Activated CD8-positive, alpha-beta T cell treated with anti-CD3 and anti-CD28 coated beads for 36 hours (primary cell): ENCODE measurements at regions of chr1 and their contacts with region 1.

Region 1: DNA sequence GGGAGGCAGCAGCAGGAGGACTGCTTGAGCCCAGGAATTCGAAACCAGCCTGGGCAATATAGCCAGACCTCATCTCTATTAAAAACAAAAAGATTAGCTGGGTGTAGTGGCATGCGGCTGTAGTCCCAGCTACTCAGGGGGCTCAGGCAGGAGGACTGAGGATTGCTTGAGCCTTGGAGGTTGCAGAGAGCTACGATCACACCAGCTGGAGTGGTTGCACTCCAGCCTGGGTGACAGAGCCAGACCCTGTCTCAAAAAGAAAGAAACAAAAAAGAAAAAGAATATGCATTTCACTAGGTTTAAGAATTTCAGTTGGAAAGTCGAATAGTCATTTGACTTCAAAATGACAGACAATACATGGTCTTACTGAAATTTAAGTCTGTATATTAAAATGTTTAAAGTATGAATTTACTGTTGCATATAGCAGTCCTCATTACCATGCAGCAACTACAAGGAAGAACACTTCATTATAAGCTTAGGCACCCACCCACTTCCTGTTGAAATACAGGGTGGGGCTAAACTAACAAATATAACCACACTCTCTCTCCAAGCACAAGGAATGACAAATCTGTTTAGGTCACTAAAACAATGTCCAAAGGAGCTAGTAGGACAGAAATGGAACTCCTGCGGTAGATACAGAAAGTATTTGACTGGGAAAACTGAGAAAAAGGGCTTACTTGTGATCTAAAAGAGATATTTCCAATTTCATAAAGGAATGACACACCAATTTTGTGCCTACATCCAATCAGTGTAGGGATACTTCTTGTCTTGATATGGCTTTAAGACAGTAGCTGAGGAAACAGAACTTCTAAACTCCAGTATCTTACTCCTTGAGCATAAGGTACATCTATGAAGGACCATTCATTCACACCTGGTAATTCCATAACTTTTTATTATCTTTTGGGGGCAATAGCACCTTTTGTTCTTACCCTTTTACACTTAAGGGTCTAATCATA is 44.1 kb downstream of the GPR3 start:
- DNase-seq: no peak
- ATAC-seq: peak; percentile 77
- H3K4me3 Mint-ChIP-seq: no peak overlapping the region
- H3K27ac Mint-ChIP-seq: peak overlapping the region; percentile 71
- H3K4me1 Mint-ChIP-seq: peaks cover 71% of the 10 kb centered on the region
- H3K27me3 Mint-ChIP-seq: no peaks in the 10 kb centered on the region
- CTCF ChIP-seq: no peak

Region 2: GRCh38 chr1:27489910-27490741 is 53.6 kb after region 1 on chr1 and contains the start of gene WASF2:
- CTCF ChIA-PET with region 1: no interaction called
- POLR2A ChIA-PET with region 1: no interaction called
- intact Hi-C with region 1: loop called (anchors 5 kb)
- DNase-seq: peak; percentile 98
- ATAC-seq: peak; percentile 96
- H3K4me3 Mint-ChIP-seq: peak within 1 kb of the TSS; percentile 99
- H3K27ac Mint-ChIP-seq: peak within 1 kb of the TSS; percentile 100
- H3K4me1 Mint-ChIP-seq: peaks cover 28% of the 10 kb centered on the region
- H3K27me3 Mint-ChIP-seq: no peaks in the 10 kb centered on the region
- CTCF ChIP-seq: no peak
- total RNA-seq, gene WASF2: 108 to 111 TPM